ENCODE measurements at regions of chr16 and their contacts with region 1.

Region 1: DNA sequence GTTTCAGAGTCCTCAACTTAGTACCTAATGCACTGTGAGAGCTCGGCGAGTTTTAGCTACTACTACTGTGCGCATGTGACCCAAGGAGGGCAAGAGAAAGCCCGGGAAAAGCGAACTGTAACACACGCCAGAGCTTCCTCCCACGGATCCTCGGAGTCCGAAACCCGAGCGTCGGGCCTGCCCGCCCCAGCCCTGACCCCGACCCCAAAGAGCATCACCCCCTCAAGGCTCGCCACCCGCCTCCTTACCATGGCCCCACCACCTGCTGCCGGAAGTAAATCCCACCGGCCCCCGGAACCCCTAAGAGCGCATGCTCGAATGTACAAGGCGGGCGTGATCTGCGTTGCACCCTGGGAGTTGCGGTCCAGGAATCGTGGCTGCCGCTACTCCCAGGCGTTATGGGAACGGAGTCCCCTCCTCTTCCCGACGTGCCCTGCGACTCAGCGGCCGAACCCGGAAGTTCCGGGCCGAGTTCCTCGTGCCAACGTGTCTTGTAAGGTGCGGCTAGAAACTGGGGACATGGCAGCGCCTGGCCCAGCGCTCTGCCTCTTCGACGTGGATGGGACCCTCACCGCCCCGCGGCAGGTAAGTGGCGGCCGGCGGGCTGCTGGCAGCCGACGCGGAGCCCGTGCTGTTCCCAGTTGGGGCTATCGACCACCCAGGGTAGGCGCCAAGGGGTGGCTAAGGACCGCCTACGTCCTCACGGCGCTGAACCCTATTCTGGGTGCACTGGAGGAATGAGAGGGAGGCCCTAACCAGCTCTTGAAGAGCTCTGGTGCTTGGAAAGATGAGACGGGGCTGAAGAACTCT is at the starts of genes PMM2 and TMEM186:
- DNase-seq: peak; percentile 96
- H3K4me3 Mint-ChIP-seq: peak within 1 kb of the TSS; percentile 95
- H3K27ac Mint-ChIP-seq: peak within 1 kb of the TSS; percentile 91
- H3K4me1 Mint-ChIP-seq: peaks cover 49% of the 10 kb centered on the region
- H3K27me3 Mint-ChIP-seq: no peaks in the 10 kb centered on the region
- total RNA-seq, gene PMM2: 20.1 to 20.8 TPM
- total RNA-seq, gene TMEM186: 12.1 to 12.6 TPM

Region 2: DNA sequence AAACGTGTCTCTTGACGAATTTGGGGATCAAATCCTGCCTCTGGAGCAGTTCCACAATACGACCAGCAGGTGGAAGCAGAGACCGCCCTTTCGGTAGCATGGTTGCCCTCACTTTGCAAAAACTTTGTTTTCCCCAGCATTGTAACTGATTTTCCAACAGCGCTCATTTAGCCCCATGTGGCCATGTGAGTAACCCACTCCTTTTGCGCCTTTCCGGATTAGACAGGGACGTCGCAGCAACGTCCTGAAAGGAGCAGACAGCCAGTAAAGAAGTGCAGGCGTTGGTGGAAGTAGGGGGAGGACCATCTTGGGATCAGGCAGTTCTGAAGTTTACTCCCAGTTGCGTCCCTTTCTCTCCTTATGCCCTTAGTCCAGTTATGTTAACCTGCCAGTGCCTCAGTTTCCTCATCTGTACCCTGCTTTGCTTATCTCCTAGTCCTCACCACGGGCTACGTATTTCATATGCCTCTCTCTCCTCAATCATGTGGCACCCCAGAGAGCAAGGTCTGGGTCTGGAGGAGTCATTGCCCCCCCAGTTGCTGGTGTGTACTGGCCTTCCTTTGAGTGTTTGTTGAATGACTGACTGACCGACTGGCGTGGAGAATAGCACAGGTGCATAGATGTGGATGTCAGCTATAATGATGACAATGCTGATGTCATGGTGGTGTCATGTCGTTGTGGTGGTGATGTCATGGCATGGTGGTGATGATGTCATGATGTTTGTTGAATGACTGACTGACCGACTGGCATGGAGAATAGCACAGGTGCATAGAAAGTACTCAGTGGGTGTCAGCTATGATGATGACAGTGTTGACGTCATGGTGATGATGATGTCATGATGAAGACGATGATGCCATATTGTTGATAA is 229.6 kb before region 1 on chr16:
- CTCF ChIA-PET with region 1: interaction called, 5 read pairs
- intact Hi-C with region 1: loop called (anchors 1 kb)
- DNase-seq: peak; percentile 87
- H3K4me3 Mint-ChIP-seq: no peak overlapping the region
- H3K27ac Mint-ChIP-seq: no peak overlapping the region
- H3K4me1 Mint-ChIP-seq: peaks cover 1% of the 10 kb centered on the region
- H3K27me3 Mint-ChIP-seq: peaks cover 12% of the 10 kb centered on the region

Region 3: GRCh38 chr16:8660841-8661301 is 136.7 kb before region 1 on chr16:
- CTCF ChIA-PET with region 1: interaction called, 11 read pairs
- intact Hi-C with region 1: loop called (anchors 1 kb)
- DNase-seq: peak; percentile 70
- H3K4me3 Mint-ChIP-seq: no peak overlapping the region
- H3K27ac Mint-ChIP-seq: no peak overlapping the region
- H3K4me1 Mint-ChIP-seq: no peaks in the 10 kb centered on the region
- H3K27me3 Mint-ChIP-seq: no peaks in the 10 kb centered on the region

Region 4: DNA sequence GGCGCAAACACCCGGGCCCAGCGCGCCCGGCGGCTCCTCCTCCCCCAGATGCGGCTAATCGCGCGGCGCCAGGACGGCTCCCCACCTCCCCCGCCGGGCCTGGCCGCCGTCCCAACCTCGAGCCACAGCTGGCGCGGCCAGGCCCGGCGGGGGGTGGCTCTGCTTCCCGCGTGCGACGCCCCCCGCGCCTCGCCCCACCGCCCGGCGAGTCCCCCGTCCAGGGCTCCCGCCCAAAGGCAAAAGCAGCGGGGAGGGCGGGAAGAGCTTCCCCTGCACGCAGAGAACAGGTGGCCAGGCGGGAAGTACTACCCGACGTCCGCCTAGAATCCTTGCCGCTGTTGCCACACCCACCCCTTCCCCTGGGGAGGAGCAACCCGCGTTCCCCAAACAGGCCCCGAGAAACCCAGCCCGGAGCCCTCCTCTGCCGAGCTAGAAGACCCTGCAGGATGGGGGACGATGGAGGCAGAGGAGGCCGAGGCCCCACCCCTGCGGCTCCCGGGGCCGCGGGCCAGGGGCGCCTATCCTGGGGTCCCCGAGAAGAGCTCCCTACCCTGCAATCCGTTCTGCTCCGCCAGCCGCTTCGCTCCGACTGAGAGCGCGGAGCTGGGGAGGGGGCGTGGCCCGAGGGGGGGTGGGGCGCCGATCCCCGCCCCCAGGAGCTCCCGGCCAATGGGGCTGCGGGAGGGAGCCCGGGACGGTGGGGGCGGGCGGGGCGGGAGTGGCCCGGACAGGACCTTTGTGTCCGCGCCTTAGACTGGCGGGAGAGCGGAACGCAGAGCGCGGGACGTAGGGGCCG is 71.0 kb after region 1 on chr16 and contains the start of gene CARHSP1:
- CTCF ChIA-PET with region 1: no interaction called
- intact Hi-C with region 1: loop called (anchors 1 kb)
- DNase-seq: peak; percentile 81
- H3K4me3 Mint-ChIP-seq: peak within 1 kb of the TSS; percentile 89
- H3K27ac Mint-ChIP-seq: peak within 1 kb of the TSS; percentile 83
- H3K4me1 Mint-ChIP-seq: peaks cover 36% of the 10 kb centered on the region
- H3K27me3 Mint-ChIP-seq: no peaks in the 10 kb centered on the region
- total RNA-seq, gene CARHSP1: 46.5 to 49.6 TPM

Region 5: DNA sequence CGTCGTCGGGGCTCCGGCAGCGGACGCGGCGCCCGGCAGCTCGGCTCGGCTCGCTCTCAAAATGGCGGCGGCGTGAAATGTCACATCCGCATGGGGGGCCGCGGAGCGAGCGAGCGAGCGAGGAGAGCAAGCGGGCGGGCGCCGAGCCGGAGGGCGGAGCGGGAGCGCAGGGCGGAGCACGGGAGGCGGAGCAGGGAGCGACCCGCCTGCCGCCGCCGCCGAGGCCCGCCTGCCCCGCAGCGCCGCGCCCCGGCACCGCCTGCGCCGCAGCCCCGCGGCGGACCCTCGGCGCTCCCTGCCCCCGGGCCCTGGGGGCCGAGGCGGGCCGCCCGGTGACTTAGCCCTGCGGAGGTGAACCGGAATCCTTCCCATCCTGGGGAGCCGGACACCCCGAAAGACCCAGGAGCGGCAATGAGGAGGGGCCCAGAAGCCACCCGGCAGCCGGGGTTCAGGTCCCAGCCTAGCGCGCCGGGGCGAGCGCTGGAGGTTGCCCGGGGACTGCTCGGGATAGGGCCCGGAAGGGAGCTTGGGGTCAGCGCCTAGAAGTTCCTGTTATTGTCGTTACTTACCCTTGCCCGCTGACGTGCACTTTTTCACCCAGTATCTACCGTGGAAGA is 166.4 kb after region 1 on chr16 and contains the start of gene USP7:
- CTCF ChIA-PET with region 1: no interaction called
- intact Hi-C with region 1: loop called (anchors 5 kb)
- DNase-seq: peak; percentile 94
- H3K4me3 Mint-ChIP-seq: peak within 1 kb of the TSS; percentile 86
- H3K27ac Mint-ChIP-seq: peak within 1 kb of the TSS; percentile 88
- H3K4me1 Mint-ChIP-seq: peaks cover 38% of the 10 kb centered on the region
- H3K27me3 Mint-ChIP-seq: peaks cover 3% of the 10 kb centered on the region
- total RNA-seq, gene USP7: 155 to 163 TPM

Region 6: DNA sequence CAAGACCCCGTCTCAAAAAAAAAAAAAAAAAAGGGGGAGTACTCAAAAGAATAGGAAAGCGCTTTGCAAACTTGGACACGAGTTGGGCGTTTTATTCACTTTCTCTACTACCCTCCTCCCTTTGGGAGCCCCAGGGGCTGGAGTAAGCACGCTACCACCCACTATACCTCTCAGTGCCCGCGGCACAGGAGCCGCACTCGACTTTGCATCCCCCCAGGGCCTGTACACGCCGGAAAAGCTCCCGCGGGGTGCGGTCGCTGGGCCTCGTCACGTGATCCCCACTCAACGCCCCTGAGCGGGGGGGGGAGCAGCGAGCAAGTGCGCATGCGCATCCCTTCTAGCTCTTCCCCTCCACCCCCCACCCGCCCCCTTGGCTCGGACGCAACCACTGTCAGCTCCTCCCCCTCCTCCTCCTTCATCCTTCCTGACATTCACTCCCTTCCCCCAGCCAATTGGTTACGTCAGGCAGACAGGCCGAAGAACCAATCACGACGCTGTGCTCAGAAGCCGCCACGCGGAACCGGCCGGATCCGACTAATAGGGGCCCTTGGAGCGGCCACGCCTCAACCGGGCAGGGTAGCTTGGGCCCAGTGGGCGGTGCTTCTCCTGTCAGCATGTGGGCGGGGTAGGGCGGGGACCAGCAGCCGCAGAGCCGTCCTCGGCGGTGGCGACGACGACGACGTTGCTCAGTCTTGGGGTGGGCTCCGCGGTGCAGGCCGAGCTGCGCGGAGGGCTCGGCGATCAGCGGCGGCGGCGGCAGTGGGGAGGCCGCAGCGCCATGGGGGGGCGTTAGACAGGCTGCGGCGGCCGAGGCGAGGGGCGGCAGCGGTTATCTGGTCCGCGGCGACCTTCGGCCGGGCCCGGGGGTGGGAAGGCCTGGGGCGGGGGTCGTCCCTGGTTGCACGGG is 293.6 kb after region 1 on chr16 and contains the start of gene HAPSTR1:
- CTCF ChIA-PET with region 1: no interaction called
- intact Hi-C with region 1: loop called (anchors 1 kb)
- DNase-seq: peak; percentile 100
- H3K4me3 Mint-ChIP-seq: peak within 1 kb of the TSS; percentile 94
- H3K27ac Mint-ChIP-seq: peak within 1 kb of the TSS; percentile 92
- H3K4me1 Mint-ChIP-seq: peaks cover 27% of the 10 kb centered on the region
- H3K27me3 Mint-ChIP-seq: no peaks in the 10 kb centered on the region
- total RNA-seq, gene HAPSTR1: 41.2 to 42.6 TPM